ENCODE measurements at regions of chr16 and their contacts with region 1.

Region 1: DNA sequence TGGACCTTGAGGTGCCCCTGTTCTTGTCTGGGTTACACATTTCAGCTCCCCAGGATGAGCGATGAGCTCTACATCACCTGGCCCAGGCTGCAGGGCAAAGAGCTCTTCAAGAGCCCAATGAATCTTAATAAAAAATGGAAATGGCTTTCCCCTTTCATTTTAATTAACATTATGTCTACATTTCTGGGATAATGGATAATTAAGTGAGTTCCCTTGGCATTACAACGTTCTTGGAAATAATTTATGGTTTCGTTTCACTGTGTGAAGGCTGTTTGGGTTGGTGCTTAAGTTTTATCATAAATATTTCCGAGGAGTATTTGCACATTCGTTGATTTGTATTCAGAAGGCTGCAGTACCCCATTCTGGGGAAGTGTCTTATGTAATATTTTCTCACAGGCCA is 678.3 kb upstream of the EEF2KMT start:
- DNase-seq: no peak
- ATAC-seq: no peak
- H3K4me3 ChIP-seq: no peak overlapping the region
- H3K27ac ChIP-seq: no peak overlapping the region
- H3K4me1 ChIP-seq: no peaks in the 10 kb centered on the region
- H3K27me3 ChIP-seq: no peaks in the 10 kb centered on the region
- CTCF ChIP-seq: no peak
- POLR2A ChIP-seq: no peak

Region 2: DNA sequence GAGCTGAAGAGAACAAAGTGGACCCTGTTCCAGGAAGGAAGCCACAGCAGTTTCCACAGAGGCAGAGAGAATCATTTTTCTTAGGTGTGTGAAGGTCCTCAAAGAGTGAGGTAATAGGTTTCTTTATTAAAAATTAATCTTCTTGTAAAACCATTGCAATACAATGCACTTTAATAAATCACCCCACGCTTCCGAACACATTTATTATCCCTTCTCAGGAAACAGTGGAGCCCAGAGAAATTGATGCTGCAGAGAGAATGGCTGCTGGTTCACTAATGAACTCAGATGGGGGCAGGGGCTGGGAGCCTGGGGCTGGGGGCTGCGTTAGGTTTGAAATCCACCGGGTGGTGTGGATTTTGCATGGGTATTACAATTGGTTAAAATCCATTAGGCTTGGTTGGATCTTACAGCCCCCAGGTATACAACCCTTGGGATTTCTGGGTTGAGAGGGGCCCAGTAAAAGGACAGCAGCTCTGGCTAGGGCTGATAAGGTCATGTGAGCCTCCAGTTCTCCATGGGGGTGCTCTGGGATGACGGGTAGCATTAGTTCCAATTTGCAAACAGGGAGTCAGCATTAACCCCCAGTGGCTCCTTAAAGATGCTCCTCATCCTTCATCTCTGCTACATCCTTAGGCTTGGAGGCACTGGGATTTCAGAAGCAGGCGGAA is 39.8 kb after region 1 on chr16:
- intact Hi-C with region 1: loop called in 1 of 10 experiments (anchors 2 kb)
- DNase-seq: no peak
- ATAC-seq: no peak
- H3K4me3 ChIP-seq: no peak overlapping the region
- H3K27ac ChIP-seq: no peak overlapping the region
- H3K4me1 ChIP-seq: no peaks in the 10 kb centered on the region
- H3K27me3 ChIP-seq: no peaks in the 10 kb centered on the region
- CTCF ChIP-seq: no peak
- POLR2A ChIP-seq: no peak

Region 3: GRCh38 chr16:6096931-6097670 is 321.2 kb after region 1 on chr16:
- intact Hi-C with region 1: no loop called
- DNase-seq: no peak
- ATAC-seq: no peak
- H3K4me3 ChIP-seq: no peak overlapping the region
- H3K27ac ChIP-seq: no peak overlapping the region
- H3K4me1 ChIP-seq: no peaks in the 10 kb centered on the region
- H3K27me3 ChIP-seq: no peaks in the 10 kb centered on the region
- CTCF ChIP-seq: no peak
- POLR2A ChIP-seq: no peak

Measured in heart left ventricle (tissue), 16 donors.